SK-MEL-5 (cell line): ENCODE measurements at regions of chr2 and their contacts with region 1.

Region 1: GRCh38 chr2:9205963-9206948 is at the start of gene ASAP2:
- DNase-seq: peak; percentile 69
- total RNA-seq, gene ASAP2: 16.1 and 17.6 TPM in 2 replicates

Region 2: GRCh38 chr2:8719528-8719927 is 486.7 kb before region 1 on chr2:
- in situ Hi-C with region 1: no loop called
- DNase-seq: no peak

Region 3: GRCh38 chr2:9142551-9143263 is 63.5 kb before region 1 on chr2:
- in situ Hi-C with region 1: loop called (anchors 5 kb)
- DNase-seq: peak; percentile 87